ENCODE measurements at regions of chr4 and their contacts with region 1.

Region 1: DNA sequence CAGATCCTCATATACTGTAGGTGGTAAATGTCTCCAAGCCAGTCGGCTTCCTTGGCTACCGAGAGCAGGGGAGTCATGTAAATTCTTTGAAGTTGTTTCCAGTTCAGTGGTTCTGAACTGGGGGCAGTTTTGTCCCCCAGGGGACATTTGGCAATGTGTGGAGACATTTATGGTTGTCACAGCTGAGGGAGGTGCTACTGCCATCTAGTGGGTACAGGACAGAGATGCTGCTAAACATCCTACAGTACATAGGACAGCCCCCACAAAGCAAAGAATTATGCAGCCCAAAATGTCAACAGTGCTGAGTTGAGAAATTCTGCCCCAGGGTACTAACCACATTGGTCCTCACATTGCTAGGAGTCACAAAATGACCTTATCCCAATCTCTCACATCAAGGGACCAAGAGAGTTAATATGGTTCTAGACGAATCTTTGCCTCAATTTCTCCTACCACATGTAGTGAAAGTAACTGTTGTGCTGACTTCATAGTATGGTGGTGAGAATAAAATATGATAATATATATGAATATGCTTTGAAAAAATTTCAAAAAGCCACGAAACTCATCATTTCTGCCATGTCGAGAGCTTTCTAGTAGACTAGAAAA is 104.4 kb upstream of the ARHGAP24 start:
- DNase-seq: peak in 1 of 2 donors; percentile 10
- ATAC-seq: peak in 1 of 4 donors; percentile 33
- H3K4me3 ChIP-seq: no peak overlapping the region
- H3K27ac ChIP-seq: no peak overlapping the region
- H3K4me1 ChIP-seq: no peaks in the 10 kb centered on the region
- H3K27me3 ChIP-seq: no peaks in the 10 kb centered on the region
- CTCF ChIP-seq: peak; percentile 43

Region 2: DNA sequence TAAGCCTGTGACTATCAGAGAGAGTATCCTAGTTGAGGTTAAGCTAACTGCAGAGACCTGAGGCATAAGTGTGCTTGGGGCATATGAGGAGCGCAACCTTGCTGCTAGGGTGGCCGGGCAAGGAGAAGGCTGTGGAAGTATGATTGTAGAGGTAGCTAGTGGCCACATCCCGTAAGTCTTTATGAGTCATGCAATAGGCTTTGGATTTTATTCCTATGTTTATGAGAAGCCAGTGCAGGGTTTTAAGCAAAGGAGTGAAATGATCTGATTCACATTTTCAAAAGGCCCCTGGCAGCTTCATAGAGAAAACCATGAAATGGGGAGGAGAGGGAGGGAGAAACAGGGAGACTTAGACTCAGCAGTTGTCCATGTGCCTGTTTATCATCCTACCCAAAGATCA is 312.0 kb before region 1 on chr4:
- intact Hi-C with region 1: no loop called
- DNase-seq: no peak
- ATAC-seq: no peak
- H3K4me3 ChIP-seq: no peak overlapping the region
- H3K27ac ChIP-seq: no peak overlapping the region
- H3K4me1 ChIP-seq: no peaks in the 10 kb centered on the region
- H3K27me3 ChIP-seq: no peaks in the 10 kb centered on the region
- CTCF ChIP-seq: no peak

Region 3: DNA sequence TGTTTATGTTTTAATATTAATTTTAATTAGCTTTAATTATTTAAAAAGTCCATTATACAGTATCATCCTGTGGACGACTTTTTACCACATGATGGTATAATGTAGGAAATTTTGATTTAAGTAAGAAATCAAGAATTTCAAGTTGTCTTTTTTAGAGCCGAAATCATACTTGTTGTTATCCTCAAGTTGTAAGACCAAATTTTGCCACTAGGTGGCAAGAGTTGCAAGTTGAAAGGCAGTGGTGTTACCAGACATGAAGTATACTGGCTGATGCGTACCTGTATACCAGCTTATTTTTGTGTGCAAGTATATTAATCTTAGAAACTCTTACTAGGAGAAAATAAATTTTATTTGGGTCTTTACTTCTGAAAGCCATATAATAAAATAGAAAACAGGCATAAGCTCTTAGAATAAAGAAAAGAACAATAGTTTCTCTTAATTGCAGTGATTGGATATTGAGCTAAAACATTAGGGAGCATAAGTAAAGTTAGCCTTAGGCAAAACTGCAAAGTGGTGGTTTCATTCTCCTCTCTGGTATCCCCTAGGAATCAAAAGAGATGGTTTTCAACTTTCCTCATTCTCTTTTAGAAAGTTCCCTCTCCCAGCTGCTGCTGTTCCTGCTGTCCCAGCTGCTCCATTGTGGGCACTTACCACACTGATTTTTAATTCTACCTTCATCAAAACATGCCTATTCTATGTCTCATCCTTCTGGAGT is 286.0 kb before region 1 on chr4:
- intact Hi-C with region 1: loop called in 1 of 2 experiments (anchors 5 kb)
- DNase-seq: no peak
- ATAC-seq: peak in 2 of 4 donors; percentile 47 to 56
- H3K4me3 ChIP-seq: no peak overlapping the region
- H3K27ac ChIP-seq: no peak overlapping the region
- H3K4me1 ChIP-seq: no peaks in the 10 kb centered on the region
- H3K27me3 ChIP-seq: no peaks in the 10 kb centered on the region
- CTCF ChIP-seq: peak; percentile 68

Region 4: GRCh38 chr4:85147439-85148076 is 223.0 kb before region 1 on chr4:
- intact Hi-C with region 1: loop called in 1 of 2 experiments (anchors 5 kb)
- DNase-seq: peak in 1 of 2 donors; percentile 54
- ATAC-seq: peak in 2 of 4 donors; percentile 57 to 79
- H3K4me3 ChIP-seq: peak overlapping the region; percentile 16
- H3K27ac ChIP-seq: no peak overlapping the region
- H3K4me1 ChIP-seq: no peaks in the 10 kb centered on the region
- H3K27me3 ChIP-seq: no peaks in the 10 kb centered on the region
- CTCF ChIP-seq: peak; percentile 61

Measured in psoas muscle (tissue), 8 donors.